ENCODE measurements at regions of chr20 and their contacts with region 1.

Region 1: DNA sequence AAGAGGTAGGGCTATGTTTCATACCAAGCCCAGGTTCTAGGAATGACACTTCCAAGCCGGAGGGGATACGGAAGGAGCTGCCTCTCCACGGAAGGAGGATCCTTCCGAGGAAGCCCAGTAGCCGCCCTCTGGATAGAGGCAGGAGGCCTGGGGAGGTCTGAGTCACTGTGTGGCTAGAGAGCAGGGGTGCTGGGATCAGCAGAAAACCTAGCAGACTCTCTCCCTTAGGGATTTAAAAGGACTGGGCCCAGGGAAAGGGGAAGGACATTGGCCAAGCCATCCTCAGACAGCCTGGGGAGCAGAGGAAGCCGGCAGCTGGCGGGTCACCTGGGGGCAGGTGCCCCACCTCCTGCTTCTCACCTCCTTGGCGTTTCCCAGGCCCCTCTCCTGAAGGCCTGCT is 36.6 kb upstream of the NFATC2 start:
- DNase-seq: peak; percentile 22
- H3K4me3 Mint-ChIP-seq: no peak overlapping the region
- H3K27ac Mint-ChIP-seq: no peak overlapping the region
- H3K4me1 Mint-ChIP-seq: peaks cover 2% of the 10 kb centered on the region
- H3K27me3 Mint-ChIP-seq: peaks cover 16% of the 10 kb centered on the region
- CTCF ChIP-seq: no peak

Region 2: DNA sequence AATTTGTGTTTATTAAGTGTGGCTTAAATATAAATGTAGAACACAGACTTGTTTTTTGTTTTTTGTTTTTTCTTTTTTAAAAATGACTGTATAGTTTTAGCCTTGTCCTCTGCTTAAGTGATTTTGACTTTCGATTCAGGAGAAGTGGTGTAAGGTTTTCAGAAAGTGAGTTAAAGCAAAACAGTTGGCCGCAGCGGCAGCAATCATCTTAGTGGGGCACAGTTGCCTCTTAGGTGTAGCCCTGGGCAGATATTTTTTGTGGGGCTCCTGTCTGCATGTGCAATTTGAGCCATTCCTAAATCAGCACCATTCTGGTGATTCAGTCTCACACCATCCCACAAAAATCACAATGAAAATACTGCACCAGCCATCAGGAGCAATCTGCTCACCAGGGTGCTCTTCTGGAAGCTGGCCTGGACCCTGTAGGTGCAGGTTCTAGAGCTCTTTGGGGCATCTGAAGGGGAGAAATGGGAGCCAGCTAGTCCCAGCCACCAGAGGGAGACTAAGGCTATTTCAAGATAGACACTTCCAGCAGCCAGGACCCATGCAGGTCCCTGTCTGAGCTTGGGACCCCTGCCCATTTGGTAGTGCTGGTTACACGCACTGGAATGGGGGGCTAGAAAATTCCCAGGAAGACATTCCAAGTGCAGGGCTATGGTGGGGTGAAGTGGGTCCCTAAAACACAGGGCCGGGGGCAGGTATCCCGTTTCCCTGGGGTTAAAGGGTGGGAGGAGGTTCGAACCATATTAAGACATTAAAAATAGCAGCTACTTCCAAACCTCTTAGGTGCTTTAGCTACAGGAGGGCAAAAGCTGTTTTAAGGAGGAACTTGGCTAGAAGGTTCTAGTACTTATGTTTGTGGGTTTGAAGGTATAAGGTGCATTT is 193.2 kb before region 1 on chr20:
- CTCF ChIA-PET with region 1: interaction called, 13 read pairs
- POLR2A ChIA-PET with region 1: no interaction called
- intact Hi-C with region 1: no loop called
- DNase-seq: peak; percentile 52
- H3K4me3 Mint-ChIP-seq: no peak overlapping the region
- H3K27ac Mint-ChIP-seq: no peak overlapping the region
- H3K4me1 Mint-ChIP-seq: no peaks in the 10 kb centered on the region
- H3K27me3 Mint-ChIP-seq: no peaks in the 10 kb centered on the region
- CTCF ChIP-seq: peak; percentile 51

Measured in MCF 10A (cell line).